Calu3 (cell line): ENCODE measurements at regions of chr10 and their contacts with region 1.

Region 1: DNA sequence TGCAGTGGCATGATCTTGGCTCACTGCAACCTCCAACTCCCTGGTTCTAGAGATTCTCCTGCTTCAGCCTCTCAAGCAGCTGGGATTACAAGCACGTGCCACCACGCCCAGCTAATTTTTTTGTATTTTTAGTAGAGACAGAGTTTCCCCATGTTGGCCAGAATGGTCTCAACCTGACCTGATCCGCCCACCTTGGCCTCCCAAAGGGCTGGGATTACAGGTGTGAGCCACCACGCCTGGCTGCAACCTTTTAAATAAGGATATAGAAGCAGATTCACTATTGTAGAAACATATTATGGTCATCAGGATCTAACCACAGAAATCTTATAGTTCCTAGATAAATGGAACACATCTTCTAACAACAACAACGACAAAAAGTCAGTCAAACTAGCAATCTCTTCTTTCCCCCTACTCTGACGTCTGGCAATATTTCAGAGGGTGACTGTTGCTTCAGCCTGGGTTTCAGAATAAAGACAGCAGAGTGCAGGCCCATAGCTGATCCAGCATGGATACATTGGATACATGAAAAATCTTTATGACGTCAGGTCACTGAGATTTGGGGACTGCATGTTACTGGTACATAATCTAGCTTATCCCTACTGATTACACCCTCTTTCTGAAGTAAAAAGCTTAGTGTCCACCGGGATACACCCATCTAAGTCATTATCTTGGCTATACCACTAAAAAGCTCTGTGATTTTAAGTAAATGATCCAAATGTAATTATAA is 112.6 kb upstream of the MINDY3 start:
- DNase-seq: no peak
- H3K4me3 Mint-ChIP-seq: no peak overlapping the region
- H3K27ac Mint-ChIP-seq: no peak overlapping the region
- H3K4me1 Mint-ChIP-seq: no peaks in the 10 kb centered on the region
- H3K27me3 Mint-ChIP-seq: peaks cover 10% of the 10 kb centered on the region
- CTCF ChIP-seq: no peak

Region 2: GRCh38 chr10:15237351-15237750 is 735.5 kb before region 1 on chr10:
- CTCF ChIA-PET with region 1: no interaction called
- intact Hi-C with region 1: loop called (anchors 10 kb)
- DNase-seq: peak; percentile 60
- H3K4me3 Mint-ChIP-seq: no peak overlapping the region
- H3K27ac Mint-ChIP-seq: peak overlapping the region; percentile 85
- H3K4me1 Mint-ChIP-seq: peaks cover 14% of the 10 kb centered on the region
- H3K27me3 Mint-ChIP-seq: peaks cover 5% of the 10 kb centered on the region
- CTCF ChIP-seq: no peak

Region 3: GRCh38 chr10:15325243-15325943 is 647.5 kb before region 1 on chr10:
- CTCF ChIA-PET with region 1: no interaction called
- intact Hi-C with region 1: no loop called
- DNase-seq: no peak
- H3K4me3 Mint-ChIP-seq: no peak overlapping the region
- H3K27ac Mint-ChIP-seq: no peak overlapping the region
- H3K4me1 Mint-ChIP-seq: no peaks in the 10 kb centered on the region
- H3K27me3 Mint-ChIP-seq: peaks cover 71% of the 10 kb centered on the region
- CTCF ChIP-seq: no peak

Region 4: DNA sequence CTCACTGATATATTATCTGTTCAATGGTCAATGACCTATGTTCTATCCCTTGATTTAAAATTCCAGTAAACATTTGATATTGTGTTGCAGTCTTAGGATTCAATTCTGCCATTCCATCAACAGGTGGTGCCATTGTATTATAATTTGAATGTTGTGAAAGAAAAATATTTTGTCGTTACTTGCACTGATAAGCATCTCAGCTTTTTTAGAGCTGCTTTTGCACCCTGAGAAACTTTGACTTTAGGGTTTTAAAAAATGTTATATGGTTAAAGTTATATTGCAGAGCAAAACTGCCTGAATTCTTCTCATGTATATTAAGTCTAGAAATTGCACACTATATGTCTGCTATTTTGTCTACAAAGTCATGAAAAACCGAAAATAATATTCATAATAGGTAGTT is 93.8 kb before region 1 on chr10:
- CTCF ChIA-PET with region 1: no interaction called
- intact Hi-C with region 1: no loop called
- DNase-seq: no peak
- H3K4me3 Mint-ChIP-seq: no peak overlapping the region
- H3K27ac Mint-ChIP-seq: no peak overlapping the region
- H3K4me1 Mint-ChIP-seq: no peaks in the 10 kb centered on the region
- H3K27me3 Mint-ChIP-seq: peaks cover 61% of the 10 kb centered on the region
- CTCF ChIP-seq: peak; percentile 35

Region 5: DNA sequence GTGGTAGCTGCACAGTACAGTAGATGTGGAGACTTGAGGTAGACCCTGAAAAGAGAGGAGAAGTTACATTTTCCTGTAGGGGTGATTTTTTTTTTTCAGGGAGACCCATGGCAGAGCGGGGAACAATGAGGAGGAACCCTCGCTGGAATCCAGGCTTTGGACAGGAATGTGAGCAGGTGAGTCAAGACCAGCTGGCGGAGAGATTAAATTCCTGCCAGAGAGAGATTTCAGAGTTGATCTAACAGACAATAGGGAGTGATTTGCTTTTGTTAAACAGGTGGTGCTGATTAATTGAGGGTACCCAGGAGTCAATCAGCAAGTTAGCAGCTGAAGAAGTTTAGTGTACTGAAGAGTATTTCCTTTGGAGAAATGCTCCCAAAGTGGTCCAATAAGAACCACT is 71.0 kb before region 1 on chr10:
- CTCF ChIA-PET with region 1: no interaction called
- intact Hi-C with region 1: no loop called
- DNase-seq: no peak
- H3K4me3 Mint-ChIP-seq: no peak overlapping the region
- H3K27ac Mint-ChIP-seq: no peak overlapping the region
- H3K4me1 Mint-ChIP-seq: no peaks in the 10 kb centered on the region
- H3K27me3 Mint-ChIP-seq: peaks cover 23% of the 10 kb centered on the region
- CTCF ChIP-seq: no peak